Activated CD4-positive, alpha-beta T cell treated with anti-CD3 and anti-CD28 coated beads for 36 hours (primary cell): ENCODE measurements at regions of chr17 and their contacts with region 1.

Region 1: GRCh38 chr17:77054936-77055335 is 85.8 kb upstream of the SEC14L1 start:
- DNase-seq: no peak
- ATAC-seq: no peak
- H3K4me3 Mint-ChIP-seq: no peak overlapping the region
- H3K27ac Mint-ChIP-seq: no peak overlapping the region
- H3K4me1 Mint-ChIP-seq: no peaks in the 10 kb centered on the region
- H3K27me3 Mint-ChIP-seq: peaks cover 8% of the 10 kb centered on the region

Region 2: GRCh38 chr17:76816590-76817135 is 238.3 kb before region 1 on chr17:
- CTCF ChIA-PET with region 1: interaction called, 4 read pairs
- POLR2A ChIA-PET with region 1: no interaction called
- intact Hi-C with region 1: loop called in 1 of 2 experiments (anchors 5 kb)
- DNase-seq: peak; percentile 77
- ATAC-seq: peak; percentile 97
- H3K4me3 Mint-ChIP-seq: no peak overlapping the region
- H3K27ac Mint-ChIP-seq: no peak overlapping the region
- H3K4me1 Mint-ChIP-seq: peaks cover 7% of the 10 kb centered on the region
- H3K27me3 Mint-ChIP-seq: no peaks in the 10 kb centered on the region

Region 3: DNA sequence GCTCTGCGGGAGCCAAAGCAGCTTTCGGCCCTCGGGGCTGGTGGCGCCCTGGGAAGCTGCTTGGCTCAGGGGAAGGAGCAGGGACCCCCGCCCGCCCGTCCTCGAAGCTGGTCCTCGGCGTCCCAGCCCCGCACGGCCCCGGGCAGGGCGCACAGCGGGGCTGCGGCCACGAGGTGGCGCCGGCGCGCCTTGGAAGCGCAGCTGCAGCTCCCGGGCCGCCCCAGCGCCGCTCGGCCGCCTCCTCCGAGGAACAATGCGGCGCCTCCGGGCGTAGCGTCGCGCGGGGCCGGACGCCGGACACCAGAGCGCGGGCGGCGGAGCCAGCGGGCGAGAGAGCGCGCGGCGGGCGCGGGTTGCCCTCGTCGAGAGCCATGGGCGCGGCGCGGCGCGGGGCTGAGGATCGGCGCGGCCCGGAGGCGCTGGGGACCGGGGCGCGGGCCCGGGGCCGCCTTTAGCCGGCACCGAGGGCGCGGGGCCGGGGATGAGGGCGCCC is 186.7 kb before region 1 on chr17 and contains the start of gene MGAT5B:
- CTCF ChIA-PET with region 1: interaction called, 31 read pairs
- POLR2A ChIA-PET with region 1: interaction called, 4 read pairs
- intact Hi-C with region 1: loop called (anchors 1 kb)
- DNase-seq: peak; percentile 87
- ATAC-seq: peak; percentile 96
- H3K4me3 Mint-ChIP-seq: peak within 1 kb of the TSS; percentile 41
- H3K27ac Mint-ChIP-seq: no peak within 1 kb of the TSS
- H3K4me1 Mint-ChIP-seq: peaks cover 11% of the 10 kb centered on the region
- H3K27me3 Mint-ChIP-seq: peaks cover 23% of the 10 kb centered on the region
- total RNA-seq, gene MGAT5B: not detected

Region 4: DNA sequence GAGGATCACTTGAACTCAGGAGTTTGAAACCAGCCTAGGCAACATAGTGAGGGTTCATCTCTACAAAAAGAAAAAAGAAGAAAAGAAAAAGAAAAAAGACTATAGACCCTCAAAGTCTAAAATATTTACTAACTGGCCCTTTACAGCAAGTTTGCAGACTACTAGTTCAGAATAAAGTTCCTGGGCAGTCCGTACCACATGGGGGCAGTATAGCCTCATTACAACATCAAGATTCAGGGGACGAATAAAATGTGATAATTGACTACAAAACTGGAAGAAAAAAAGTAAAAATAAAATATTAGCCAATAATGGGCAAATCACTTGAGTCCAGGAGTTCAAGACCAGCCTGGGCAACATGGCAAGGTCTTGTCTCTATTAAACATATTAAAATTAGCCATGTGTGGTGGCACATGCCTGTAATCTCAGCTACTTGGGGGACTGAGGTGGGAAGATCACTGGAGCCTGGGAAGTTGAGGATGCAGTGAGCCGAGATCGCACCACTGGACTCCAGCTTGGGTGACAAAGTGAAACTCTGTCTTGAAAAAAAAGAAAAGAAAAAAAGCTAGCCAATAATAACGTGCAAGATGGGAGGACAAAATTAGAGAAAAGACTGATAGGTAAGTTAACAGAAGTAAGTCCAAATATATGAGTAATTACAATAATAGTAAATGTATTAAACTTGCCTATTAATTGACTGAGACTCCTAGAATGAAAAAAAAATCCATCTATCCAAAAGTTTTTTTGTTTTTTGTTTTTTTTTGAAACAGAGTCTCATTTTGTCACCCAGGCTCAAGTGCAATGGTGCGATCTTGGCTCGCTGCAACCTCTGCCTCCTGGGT is 43.5 kb before region 1 on chr17:
- CTCF ChIA-PET with region 1: interaction called, 10 read pairs
- POLR2A ChIA-PET with region 1: interaction called, 3 read pairs
- intact Hi-C with region 1: loop called (anchors 1 kb)
- DNase-seq: peak; percentile 72
- ATAC-seq: no peak
- H3K4me3 Mint-ChIP-seq: no peak overlapping the region
- H3K27ac Mint-ChIP-seq: no peak overlapping the region
- H3K4me1 Mint-ChIP-seq: no peaks in the 10 kb centered on the region
- H3K27me3 Mint-ChIP-seq: peaks cover 3% of the 10 kb centered on the region

Region 5: DNA sequence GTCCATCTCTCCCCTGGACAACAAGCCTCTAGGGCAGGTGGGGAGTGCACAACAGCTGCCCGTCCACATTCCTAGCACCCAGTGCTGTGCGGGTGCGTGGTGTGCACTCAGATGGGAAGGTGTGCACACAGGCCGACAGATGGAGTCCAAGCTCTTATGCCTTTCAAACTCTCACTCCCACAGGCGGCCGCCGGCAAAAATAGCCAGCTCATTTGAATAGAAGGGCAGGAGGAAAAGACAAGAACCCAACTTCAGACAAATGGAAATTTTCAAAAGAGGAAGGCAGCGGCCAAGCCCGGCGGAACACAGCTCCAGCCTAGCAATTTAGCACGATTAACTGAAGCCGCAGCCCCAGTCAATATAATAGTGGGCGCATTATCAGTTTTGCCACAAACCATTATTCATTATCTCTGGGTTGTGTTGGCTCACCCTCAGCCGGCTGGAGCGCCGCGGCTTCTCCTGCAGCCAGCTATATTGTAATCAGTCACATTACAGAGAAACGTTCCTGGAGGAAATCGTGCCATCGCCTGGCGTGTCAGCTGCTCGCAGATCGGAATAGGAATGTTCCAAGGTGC is 18.0 kb before region 1 on chr17:
- CTCF ChIA-PET with region 1: interaction called, 13 read pairs
- POLR2A ChIA-PET with region 1: no interaction called
- intact Hi-C with region 1: no loop called
- DNase-seq: no peak
- ATAC-seq: no peak
- H3K4me3 Mint-ChIP-seq: no peak overlapping the region
- H3K27ac Mint-ChIP-seq: no peak overlapping the region
- H3K4me1 Mint-ChIP-seq: no peaks in the 10 kb centered on the region
- H3K27me3 Mint-ChIP-seq: peaks cover 8% of the 10 kb centered on the region

Region 6: GRCh38 chr17:77066165-77066564 is 11.2 kb after region 1 on chr17:
- CTCF ChIA-PET with region 1: interaction called, 11 read pairs
- POLR2A ChIA-PET with region 1: no interaction called
- intact Hi-C with region 1: no loop called
- DNase-seq: no peak
- ATAC-seq: no peak
- H3K4me3 Mint-ChIP-seq: no peak overlapping the region
- H3K27ac Mint-ChIP-seq: no peak overlapping the region
- H3K4me1 Mint-ChIP-seq: no peaks in the 10 kb centered on the region
- H3K27me3 Mint-ChIP-seq: peaks cover 6% of the 10 kb centered on the region